Activated CD4-positive, alpha-beta T cell treated with anti-CD3 and anti-CD28 coated beads for 36 hours (primary cell): ENCODE measurements at regions of chr17 and their contacts with region 1.

Region 1: GRCh38 chr17:77429919-77430752 is 289.4 kb downstream of the SEC14L1 start:
- DNase-seq: peak; percentile 92
- ATAC-seq: peak; percentile 47
- H3K4me3 Mint-ChIP-seq: no peak overlapping the region
- H3K27ac Mint-ChIP-seq: peak overlapping the region; percentile 13
- H3K4me1 Mint-ChIP-seq: peaks cover 91% of the 10 kb centered on the region
- H3K27me3 Mint-ChIP-seq: no peaks in the 10 kb centered on the region

Region 2: GRCh38 chr17:77365584-77366186 is 64.5 kb before region 1 on chr17:
- CTCF ChIA-PET with region 1: no interaction called
- POLR2A ChIA-PET with region 1: no interaction called
- intact Hi-C with region 1: no loop called
- DNase-seq: peak; percentile 50
- ATAC-seq: peak; percentile 59
- H3K4me3 Mint-ChIP-seq: peak overlapping the region; percentile 5
- H3K27ac Mint-ChIP-seq: no peak overlapping the region
- H3K4me1 Mint-ChIP-seq: peaks cover 62% of the 10 kb centered on the region
- H3K27me3 Mint-ChIP-seq: no peaks in the 10 kb centered on the region

Region 3: DNA sequence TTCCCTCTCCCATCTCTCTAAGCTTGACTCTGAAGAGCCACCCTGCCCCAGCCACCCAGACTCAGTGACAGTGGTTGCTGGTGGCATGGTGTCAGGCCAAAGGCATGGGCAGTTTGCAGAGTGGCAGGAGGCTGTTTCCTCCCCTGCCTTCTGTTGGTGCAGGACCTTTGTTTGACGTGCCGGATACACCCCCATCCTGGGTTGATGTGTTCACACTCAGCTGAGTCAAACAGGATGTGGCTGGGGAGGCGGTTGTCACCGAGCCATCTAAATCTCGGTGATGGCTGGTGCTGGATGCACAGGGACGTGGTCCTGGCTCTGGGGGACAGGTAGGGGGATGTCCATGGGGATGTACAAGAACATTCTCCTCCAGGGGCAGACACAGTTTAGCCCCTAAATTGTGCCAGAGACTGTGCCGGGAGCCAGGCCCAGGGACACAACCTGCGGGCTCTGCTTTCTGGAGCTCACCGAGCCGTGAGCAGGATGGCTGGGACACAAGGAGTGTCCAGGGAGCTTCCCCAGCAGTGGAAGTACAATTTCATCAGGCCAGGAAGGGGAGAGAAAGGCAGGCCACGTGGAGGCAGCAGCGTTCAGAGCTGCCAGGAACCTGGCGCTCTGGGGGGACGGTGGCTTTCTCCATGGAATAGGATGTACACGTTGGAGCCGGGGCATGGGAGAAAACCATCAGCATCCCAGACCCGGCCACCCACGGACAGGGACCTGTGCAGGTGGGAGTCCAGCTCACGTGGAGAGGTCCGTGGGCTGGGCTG is 25.1 kb before region 1 on chr17:
- CTCF ChIA-PET with region 1: interaction called, 61 read pairs
- POLR2A ChIA-PET with region 1: interaction called, 3 read pairs
- intact Hi-C with region 1: no loop called
- DNase-seq: peak; percentile 93
- ATAC-seq: peak; percentile 79
- H3K4me3 Mint-ChIP-seq: peak overlapping the region; percentile 95
- H3K27ac Mint-ChIP-seq: peak overlapping the region; percentile 89
- H3K4me1 Mint-ChIP-seq: peaks cover 95% of the 10 kb centered on the region
- H3K27me3 Mint-ChIP-seq: no peaks in the 10 kb centered on the region

Region 4: DNA sequence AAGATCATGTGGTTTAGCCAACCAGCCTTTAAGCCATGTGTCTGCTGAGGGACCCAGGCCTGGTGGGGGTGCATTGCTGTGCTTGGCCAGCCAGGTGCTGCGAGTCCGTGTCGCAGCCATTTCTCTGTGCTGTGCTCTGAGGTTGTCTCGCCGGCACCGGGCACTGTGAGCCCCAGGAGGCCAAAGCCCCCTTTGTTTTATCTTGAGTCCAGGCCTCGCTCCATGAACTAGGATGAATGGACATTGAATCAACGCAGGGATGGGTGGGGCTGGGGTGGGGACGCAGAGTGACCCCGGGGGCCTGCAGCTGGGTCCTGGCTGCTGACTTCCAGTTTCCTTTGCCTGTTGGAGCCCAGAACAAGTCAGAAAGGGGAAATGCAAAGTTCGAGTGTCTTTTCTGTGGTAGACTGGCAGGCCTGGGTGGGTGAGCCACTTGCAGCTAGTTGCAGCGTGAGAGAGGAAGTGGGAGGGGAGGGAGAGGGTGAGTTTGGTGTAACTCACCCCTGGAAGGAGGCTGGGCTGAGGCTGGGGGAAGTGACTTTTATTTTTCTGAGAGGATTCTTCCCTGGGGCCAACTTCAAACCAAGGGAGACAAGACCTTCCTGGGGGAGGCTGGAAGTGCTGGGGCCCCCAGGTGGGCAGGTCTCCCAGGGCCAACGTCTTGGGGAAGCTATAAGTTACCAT is 35.4 kb after region 1 on chr17:
- CTCF ChIA-PET with region 1: interaction called, 13 read pairs
- POLR2A ChIA-PET with region 1: interaction called, 5 read pairs
- intact Hi-C with region 1: loop called (anchors 5 kb)
- DNase-seq: peak; percentile 90
- ATAC-seq: peak; percentile 83
- H3K4me3 Mint-ChIP-seq: peak overlapping the region; percentile 62
- H3K27ac Mint-ChIP-seq: peak overlapping the region; percentile 98
- H3K4me1 Mint-ChIP-seq: peaks cover 90% of the 10 kb centered on the region
- H3K27me3 Mint-ChIP-seq: no peaks in the 10 kb centered on the region

Region 5: DNA sequence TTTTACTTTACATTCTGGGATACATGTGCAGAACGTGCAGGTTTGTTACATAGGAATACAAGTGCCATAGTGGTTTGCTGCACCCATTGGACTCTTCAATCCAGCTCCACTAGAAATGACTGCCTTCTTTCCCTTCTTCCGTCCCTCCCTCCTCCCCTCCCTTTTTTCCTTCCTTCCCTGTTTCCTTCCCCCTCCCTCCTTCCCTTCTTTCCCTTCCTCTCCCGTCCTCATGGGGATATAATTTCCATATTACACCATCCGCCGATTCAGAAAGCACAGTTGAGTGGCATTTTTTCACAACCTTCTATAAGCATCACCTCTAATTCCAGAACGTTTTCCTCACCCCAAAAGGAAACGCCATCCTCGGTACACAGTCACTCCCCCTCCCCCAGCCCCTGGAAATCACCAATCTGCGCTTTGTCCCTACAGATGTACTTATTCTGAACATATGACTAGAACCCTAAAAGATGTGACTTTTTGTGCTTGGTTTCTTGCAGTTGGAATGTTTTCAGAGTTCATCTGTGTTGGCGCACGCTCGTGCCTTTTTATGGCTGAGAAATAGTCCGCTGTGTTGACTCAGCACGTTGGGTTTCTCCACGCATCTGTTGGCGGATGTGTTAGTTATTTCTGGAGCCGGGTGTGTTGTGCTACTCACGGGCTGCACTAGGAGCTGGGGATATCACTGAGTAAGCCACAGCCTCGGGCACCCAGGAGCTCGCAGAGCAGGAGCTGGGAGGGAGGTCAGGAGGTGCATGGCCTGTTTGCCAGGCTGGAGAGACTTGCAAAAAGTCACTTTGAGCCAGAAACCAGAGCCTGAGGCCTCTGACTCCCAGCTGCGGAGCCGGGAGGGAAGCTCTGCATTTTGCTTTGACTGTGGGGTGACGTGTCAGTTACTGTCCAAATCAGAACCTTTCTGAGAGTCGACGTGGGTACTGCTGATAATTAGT is 47.1 kb after region 1 on chr17:
- CTCF ChIA-PET with region 1: interaction called, 18 read pairs
- POLR2A ChIA-PET with region 1: interaction called, 5 read pairs
- intact Hi-C with region 1: loop called (anchors 5 kb)
- DNase-seq: peak; percentile 74
- ATAC-seq: peak; percentile 33
- H3K4me3 Mint-ChIP-seq: peak overlapping the region; percentile 24
- H3K27ac Mint-ChIP-seq: peak overlapping the region; percentile 80
- H3K4me1 Mint-ChIP-seq: peaks cover 78% of the 10 kb centered on the region
- H3K27me3 Mint-ChIP-seq: no peaks in the 10 kb centered on the region

Region 6: GRCh38 chr17:77741109-77741508 is 311.0 kb after region 1 on chr17:
- CTCF ChIA-PET with region 1: no interaction called
- POLR2A ChIA-PET with region 1: no interaction called
- intact Hi-C with region 1: loop called in 1 of 2 experiments (anchors 5 kb)
- DNase-seq: peak; percentile 76
- ATAC-seq: no peak
- H3K4me3 Mint-ChIP-seq: no peak overlapping the region
- H3K27ac Mint-ChIP-seq: no peak overlapping the region
- H3K4me1 Mint-ChIP-seq: peaks cover 3% of the 10 kb centered on the region
- H3K27me3 Mint-ChIP-seq: peaks cover 2% of the 10 kb centered on the region